ENCODE measurements at regions of chr15 and their contacts with region 1.

Region 1: GRCh38 chr15:101269479-101270223 is 7.6 kb downstream of the SELENOS start:
- DNase-seq: peak in 1 of 2 experiments; percentile 46
- H3K4me3 ChIP-seq: no peak overlapping the region
- H3K4me1 ChIP-seq: no peaks in the 10 kb centered on the region
- H3K27me3 ChIP-seq: no peaks in the 10 kb centered on the region

Region 2: DNA sequence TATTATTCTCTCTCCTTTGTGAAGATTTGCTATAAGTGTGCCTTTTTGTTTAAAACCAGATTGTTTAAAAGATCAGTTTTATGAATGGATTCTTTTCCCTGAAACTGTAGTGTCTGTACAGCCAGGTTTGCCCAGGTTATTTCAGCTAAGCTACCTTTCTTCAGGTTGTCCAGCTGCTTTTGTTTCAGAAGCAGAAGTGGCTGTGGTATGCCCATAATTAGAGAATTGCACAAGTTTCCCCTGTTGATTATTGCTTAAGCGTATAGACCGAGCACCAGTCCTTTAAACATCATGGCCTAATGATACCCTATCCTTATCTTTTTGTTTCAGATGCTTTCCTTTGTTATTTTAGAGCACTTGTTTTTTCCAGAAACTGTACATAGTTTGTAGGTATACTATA is 657.1 kb before region 1 on chr15:
- in situ Hi-C with region 1: loop called (anchors 10 kb)
- DNase-seq: no peak
- H3K4me3 ChIP-seq: no peak overlapping the region
- H3K4me1 ChIP-seq: no peaks in the 10 kb centered on the region
- H3K27me3 ChIP-seq: no peaks in the 10 kb centered on the region

Region 3: GRCh38 chr15:101342056-101342455 is 72.4 kb after region 1 on chr15:
- in situ Hi-C with region 1: no loop called
- DNase-seq: no peak
- H3K4me3 ChIP-seq: no peak overlapping the region
- H3K4me1 ChIP-seq: no peaks in the 10 kb centered on the region
- H3K27me3 ChIP-seq: no peaks in the 10 kb centered on the region

Region 4: DNA sequence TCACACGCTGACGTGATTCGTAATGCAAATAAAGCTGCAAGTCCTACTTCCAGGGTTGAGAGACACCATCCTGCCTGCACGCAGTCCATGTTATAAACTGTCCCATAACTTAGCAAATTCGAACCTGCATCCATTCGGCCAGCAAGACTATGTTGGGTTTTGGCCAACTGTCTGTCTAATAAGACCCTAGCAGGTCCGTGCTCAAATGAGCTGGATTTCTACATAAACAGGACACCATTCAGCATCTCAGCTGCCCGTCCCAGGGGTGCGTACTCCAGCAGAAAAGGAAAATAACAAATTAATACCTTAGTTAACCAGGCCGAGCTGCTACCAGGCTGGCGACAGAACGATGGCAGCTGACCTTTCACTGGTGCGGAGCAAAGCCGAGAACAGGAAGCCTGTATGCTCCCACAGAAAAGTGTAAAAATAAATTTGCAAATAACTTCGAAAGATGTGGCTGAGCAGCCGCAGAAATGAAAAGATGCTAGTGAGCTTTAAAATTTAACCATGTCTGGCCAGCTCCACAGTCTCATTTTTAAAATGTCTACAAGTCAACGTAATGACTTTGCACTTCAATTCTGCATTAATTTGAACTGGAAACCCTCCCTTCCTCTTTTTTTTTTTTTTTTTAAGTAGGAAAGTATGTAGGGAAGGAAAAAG is 122.5 kb after region 1 on chr15:
- in situ Hi-C with region 1: no loop called
- DNase-seq: no peak
- H3K4me3 ChIP-seq: no peak overlapping the region
- H3K4me1 ChIP-seq: no peaks in the 10 kb centered on the region
- H3K27me3 ChIP-seq: no peaks in the 10 kb centered on the region

Measured in HAP-1 (cell line).